ENCODE measurements at regions of chr16 and their contacts with region 1.

Region 1: DNA sequence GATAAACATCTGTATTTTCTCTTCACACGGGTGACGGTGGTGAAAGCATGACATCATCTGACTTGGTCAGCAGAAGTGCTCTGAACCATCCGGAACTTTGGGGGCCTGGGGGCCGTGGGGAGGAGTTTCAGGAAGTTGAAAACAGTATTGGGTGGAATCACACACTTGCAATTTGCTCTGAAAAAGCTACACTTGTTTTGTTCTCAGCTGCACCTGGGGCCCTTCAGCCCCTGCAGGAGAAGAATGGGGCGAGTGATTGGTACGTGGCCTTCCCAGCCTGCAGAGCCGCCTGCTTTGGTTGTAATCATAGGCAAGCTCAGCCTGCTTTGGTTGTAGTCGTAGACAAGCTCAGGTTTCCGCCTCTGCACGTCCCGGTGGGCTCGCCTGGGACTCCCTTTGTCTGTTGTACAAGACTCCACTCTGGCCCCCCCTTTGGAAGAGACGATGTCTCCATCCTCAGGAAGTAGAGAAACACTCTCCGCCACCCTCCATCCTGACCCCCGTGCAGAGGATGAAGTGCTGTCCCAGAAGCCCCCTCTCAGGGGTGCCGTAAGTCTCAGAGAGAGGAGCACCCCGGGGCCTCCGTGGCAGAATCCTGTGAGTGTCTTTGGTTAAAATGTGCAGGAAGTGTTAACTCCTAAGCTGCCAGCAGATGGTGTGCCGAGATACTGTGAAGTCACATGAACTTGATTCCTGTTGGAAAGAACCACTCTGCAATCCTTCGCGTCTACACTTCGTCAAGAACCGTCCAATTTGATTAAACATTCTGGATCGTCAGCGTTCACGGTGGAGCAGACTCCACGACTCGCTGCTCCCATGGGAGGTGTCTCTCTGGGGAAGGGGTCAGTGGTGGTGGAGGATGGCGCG is 5.4 kb downstream of the BANP start:
- DNase-seq: peak; percentile 42
- ATAC-seq: peak; percentile 74
- H3K4me3 ChIP-seq: peak overlapping the region; percentile 56
- H3K27ac ChIP-seq: peak overlapping the region; percentile 81
- H3K4me1 ChIP-seq: peaks cover 20% of the 10 kb centered on the region
- H3K27me3 ChIP-seq: no peaks in the 10 kb centered on the region
- CTCF ChIP-seq: peak; percentile 43 to 69 (median 47); a peak in 5 of 6 replicates
- EP300 ChIP-seq: peak; percentile 45 to 62; a peak in 1 of 4 replicates
- POLR2A ChIP-seq: peak; percentile 56; the same call in 1 of the 2 replicates
- RAD21 ChIP-seq: peak; percentile 63

Region 2: GRCh38 chr16:88437373-88437964 is 480.9 kb after region 1 on chr16:
- CTCF ChIA-PET with region 1: interaction called, 4 read pairs
- POLR2A ChIA-PET with region 1: no interaction called
- RAD21 ChIA-PET with region 1: no interaction called
- SMC1A ChIA-PET with region 1: no interaction called
- in situ Hi-C with region 1: loop called (anchors 25 kb)
- intact Hi-C with region 1: loop called (anchors 5 kb)
- DNase-seq: no peak
- ATAC-seq: peak; percentile 86
- H3K4me3 ChIP-seq: no peak overlapping the region
- H3K27ac ChIP-seq: no peak overlapping the region
- H3K4me1 ChIP-seq: no peaks in the 10 kb centered on the region
- H3K27me3 ChIP-seq: no peaks in the 10 kb centered on the region
- CTCF ChIP-seq: peak; percentile 71 to 87 (median 78)
- EP300 ChIP-seq: no peak
- POLR2A ChIP-seq: no peak
- RAD21 ChIP-seq: peak; percentile 73